Posterior vena cava (tissue), 2 donors: ENCODE measurements at regions of chr19 and their contacts with region 1.

Region 1: GRCh38 chr19:41671491-41671890 is 16.6 kb downstream of the CEACAM7 start:
- DNase-seq: no peak

Region 2: GRCh38 chr19:40936755-40937154 is 734.7 kb before region 1 on chr19:
- intact Hi-C with region 1: loop called in 1 of 2 experiments (anchors 5 kb)
- DNase-seq: no peak

Region 3: DNA sequence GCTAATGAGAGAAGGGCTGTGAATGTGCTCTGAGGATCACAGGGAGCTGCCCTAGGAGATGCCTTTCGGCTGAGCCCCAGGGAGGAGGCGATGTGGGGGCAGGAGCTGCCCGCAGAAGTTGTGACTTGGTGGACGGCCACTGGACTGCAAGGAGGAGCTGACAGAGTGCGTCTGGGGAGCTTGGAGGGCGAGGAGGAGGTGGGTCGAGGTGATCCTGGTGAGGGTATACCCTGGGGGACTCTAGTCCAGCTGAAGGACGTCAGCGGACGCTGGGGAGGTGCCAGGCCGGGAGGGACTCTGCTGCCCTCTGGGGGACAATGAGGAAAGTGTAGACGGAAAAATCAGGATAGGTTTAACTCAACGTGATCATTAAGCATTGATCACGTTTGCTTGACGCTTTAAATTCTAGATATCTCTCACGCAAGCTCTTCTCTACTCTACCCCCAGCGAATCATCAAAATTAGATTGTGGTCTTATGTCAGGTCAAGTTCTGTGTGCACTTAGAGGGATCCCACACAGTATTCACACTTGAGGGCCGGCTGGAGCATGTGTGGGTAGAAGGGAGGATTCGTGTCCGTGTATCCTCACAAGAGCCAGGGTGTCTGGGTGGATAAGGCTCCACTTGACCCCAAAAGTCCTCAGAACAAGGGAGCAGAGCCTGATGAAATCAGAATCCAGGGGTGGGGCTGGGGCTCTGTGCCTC is 19.9 kb after region 1 on chr19:
- intact Hi-C with region 1: no loop called
- DNase-seq: peak; percentile 68

Region 4: GRCh38 chr19:42919511-42920021 is 1248.1 kb after region 1 on chr19:
- intact Hi-C with region 1: no loop called
- DNase-seq: no peak